ENCODE measurements at regions of chr5 and their contacts with region 1.

Region 1: DNA sequence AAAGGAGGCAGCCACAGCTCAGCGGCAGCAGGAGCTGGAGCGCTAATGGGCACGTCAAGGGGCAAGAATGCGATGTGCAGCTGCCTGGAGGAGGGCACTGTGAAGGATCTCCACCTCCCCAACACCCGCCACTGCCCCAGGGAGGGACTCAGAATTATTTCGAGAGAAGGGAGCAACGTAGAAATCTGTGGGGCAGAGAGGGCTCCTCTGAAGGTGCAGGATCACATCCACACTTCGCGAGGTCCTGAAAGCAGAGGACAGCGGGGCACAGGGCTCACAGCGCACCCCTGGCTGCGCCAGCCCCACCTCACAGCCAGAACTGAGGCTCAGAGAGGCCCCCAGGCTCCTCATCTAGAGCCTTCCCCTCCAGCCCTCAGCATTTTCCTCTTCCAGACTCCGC is 7.9 kb downstream of the COL23A1 start:
- DNase-seq: no peak
- H3K4me3 Mint-ChIP-seq: no peak overlapping the region
- H3K27ac Mint-ChIP-seq: no peak overlapping the region
- H3K4me1 Mint-ChIP-seq: peaks cover 5% of the 10 kb centered on the region
- H3K27me3 Mint-ChIP-seq: no peaks in the 10 kb centered on the region
- CTCF ChIP-seq: no peak

Region 2: DNA sequence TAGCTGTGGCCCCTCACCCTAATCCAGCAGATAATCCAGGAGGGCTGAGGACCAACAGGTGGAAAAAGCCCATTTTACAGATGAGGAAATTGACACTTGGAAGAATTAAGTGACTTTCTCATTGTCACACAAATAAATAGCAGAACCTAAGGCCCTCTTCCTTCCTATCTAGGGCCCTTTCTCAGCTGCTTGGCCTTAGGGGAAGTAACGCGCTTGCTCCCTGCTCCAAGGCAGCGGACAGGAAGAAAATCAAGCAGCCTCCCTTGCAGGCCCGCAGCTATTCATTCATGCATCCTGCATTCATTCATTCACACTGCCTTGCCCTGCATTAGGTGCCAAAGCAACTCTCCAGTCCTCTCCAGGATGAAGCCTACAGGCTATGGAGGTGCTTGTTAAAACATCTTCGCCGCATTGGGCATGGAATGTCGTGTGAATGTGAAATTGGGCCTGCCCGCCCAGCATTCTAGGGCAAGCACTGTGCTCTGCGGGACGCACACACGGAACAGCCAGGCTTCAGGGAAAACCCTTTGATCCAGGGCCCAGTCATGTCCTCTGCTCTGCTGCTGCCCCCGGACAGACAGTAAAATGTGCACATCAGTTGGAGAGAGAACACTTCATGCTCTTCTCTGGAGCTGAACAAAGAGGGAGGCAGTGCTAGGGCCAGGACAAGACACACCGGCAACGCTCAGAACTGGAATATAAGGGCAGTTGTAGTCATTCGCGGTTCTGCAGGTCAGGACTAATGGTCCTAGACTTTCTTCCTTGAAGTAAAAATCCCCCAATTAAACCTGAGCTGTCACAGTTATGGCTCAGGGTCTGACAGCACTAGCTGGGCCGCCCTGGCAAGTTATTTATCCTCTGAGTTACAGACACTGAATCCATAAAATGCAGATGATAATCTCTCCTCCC is 158.1 kb before region 1 on chr5:
- CTCF ChIA-PET with region 1: no interaction called
- POLR2A ChIA-PET with region 1: no interaction called
- intact Hi-C with region 1: no loop called
- DNase-seq: no peak
- H3K4me3 Mint-ChIP-seq: no peak overlapping the region
- H3K27ac Mint-ChIP-seq: no peak overlapping the region
- H3K4me1 Mint-ChIP-seq: peaks cover 6% of the 10 kb centered on the region
- H3K27me3 Mint-ChIP-seq: no peaks in the 10 kb centered on the region
- CTCF ChIP-seq: no peak

Region 3: GRCh38 chr5:178551059-178551458 is 31.2 kb before region 1 on chr5:
- CTCF ChIA-PET with region 1: interaction called, 14 read pairs
- POLR2A ChIA-PET with region 1: no interaction called
- intact Hi-C with region 1: no loop called
- DNase-seq: peak; percentile 46
- H3K4me3 Mint-ChIP-seq: no peak overlapping the region
- H3K27ac Mint-ChIP-seq: no peak overlapping the region
- H3K4me1 Mint-ChIP-seq: peaks cover 6% of the 10 kb centered on the region
- H3K27me3 Mint-ChIP-seq: no peaks in the 10 kb centered on the region
- CTCF ChIP-seq: peak; percentile 30

Region 4: DNA sequence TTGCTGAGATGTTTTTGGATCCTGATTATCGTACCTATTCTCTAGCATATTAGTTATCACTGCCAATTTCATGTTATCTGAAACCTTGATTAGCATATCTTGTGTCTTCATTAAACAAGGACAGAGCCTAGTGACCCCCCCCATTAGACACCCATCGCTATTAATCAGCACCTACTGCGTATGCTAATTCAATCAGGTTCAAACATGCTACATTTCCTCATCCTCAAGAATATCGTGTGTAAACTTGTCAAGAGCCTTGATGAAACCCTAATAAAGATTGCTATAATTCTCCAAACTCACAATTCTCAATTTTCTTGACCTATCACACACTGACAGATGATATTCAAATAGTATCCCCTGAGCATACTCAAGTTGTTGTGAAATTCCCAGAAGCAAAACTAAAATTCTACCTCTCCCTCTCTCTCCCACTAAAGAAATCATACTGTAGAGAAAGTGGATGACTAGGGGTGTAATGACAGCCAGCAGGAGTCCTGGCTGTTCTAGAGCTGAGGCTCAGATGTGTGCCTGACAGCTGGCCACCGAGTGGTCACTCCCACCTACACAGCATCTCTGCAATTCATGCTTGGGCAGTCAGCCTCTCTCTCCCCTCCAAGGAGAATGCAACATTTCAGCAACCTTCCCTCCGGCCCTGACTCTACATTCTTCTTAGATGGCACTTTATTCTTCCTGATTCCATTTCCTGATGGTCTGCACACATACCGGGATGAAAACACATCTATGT is 157.3 kb after region 1 on chr5:
- CTCF ChIA-PET with region 1: no interaction called
- POLR2A ChIA-PET with region 1: no interaction called
- intact Hi-C with region 1: no loop called
- DNase-seq: peak; percentile 25
- H3K4me3 Mint-ChIP-seq: no peak overlapping the region
- H3K27ac Mint-ChIP-seq: no peak overlapping the region
- H3K4me1 Mint-ChIP-seq: peaks cover 25% of the 10 kb centered on the region
- H3K27me3 Mint-ChIP-seq: no peaks in the 10 kb centered on the region
- CTCF ChIP-seq: no peak

Region 5: GRCh38 chr5:178750230-178750629 is 167.9 kb after region 1 on chr5:
- CTCF ChIA-PET with region 1: no interaction called
- POLR2A ChIA-PET with region 1: no interaction called
- intact Hi-C with region 1: no loop called
- DNase-seq: no peak
- H3K4me3 Mint-ChIP-seq: no peak overlapping the region
- H3K27ac Mint-ChIP-seq: no peak overlapping the region
- H3K4me1 Mint-ChIP-seq: no peaks in the 10 kb centered on the region
- H3K27me3 Mint-ChIP-seq: no peaks in the 10 kb centered on the region
- CTCF ChIP-seq: no peak

Measured in MCF 10A (cell line).